ENCODE measurements at regions of chr12 and their contacts with region 1.

Region 1: GRCh38 chr12:107580750-107581618 is 104.6 kb upstream of the PWP1 start:
- DNase-seq: no peak
- H3K4me3 ChIP-seq: no peak overlapping the region
- H3K4me3 Mint-ChIP-seq: no peak overlapping the region
- H3K27ac ChIP-seq: no peak overlapping the region
- H3K27ac Mint-ChIP-seq: peak overlapping the region in 1 of 8 donors; percentile 69
- H3K4me1 ChIP-seq: no peaks in the 10 kb centered on the region
- H3K4me1 Mint-ChIP-seq: no peaks in the 10 kb centered on the region
- H3K27me3 ChIP-seq: no peaks in the 10 kb centered on the region
- H3K27me3 Mint-ChIP-seq: peaks cover 0 to 2% of the 10 kb centered on the region in 2 donors

Region 2: DNA sequence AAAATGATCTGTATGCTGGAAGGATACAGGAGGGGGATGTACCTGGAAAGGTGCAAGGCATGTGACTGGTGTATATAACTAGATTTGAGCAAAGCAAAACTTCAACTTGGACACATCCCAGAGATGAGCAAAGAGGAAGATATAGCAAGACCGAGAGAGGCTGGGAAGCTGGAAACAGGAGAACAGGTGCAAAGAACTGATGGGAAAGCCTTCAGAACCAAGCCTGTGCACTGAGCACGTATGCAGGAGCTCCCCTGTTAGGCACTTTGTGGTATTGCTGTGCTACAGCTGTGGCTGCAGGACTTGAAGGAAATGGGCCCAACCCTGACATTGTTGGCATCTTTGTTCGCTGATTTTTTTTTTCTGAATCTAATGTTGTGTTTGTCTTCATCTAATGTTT is 16.0 kb before region 1 on chr12:
- CTCF ChIA-PET with region 1: no interaction called
- POLR2A ChIA-PET with region 1: interaction called, 10 read pairs
- DNase-seq: peak in 1 of 5 donors; percentile 7
- H3K4me3 ChIP-seq: no peak overlapping the region
- H3K4me3 Mint-ChIP-seq: no peak overlapping the region
- H3K27ac ChIP-seq: no peak overlapping the region
- H3K27ac Mint-ChIP-seq: no peak overlapping the region
- H3K4me1 ChIP-seq: no peaks in the 10 kb centered on the region
- H3K4me1 Mint-ChIP-seq: peaks cover 0 to 6% (median 5%) of the 10 kb centered on the region in 3 donors
- H3K27me3 ChIP-seq: no peaks in the 10 kb centered on the region
- H3K27me3 Mint-ChIP-seq: peaks cover 0 to 6% of the 10 kb centered on the region in 2 donors

Region 3: GRCh38 chr12:107607464-107608392 is 26.7 kb after region 1 on chr12:
- CTCF ChIA-PET with region 1: no interaction called
- POLR2A ChIA-PET with region 1: no interaction called
- DNase-seq: peak; percentile 49 to 84 (median 71)
- H3K4me3 ChIP-seq: no peak overlapping the region
- H3K4me3 Mint-ChIP-seq: peak overlapping the region in 1 of 7 donors; percentile 2
- H3K27ac ChIP-seq: no peak overlapping the region
- H3K27ac Mint-ChIP-seq: peak overlapping the region in 1 of 8 donors; percentile 3
- H3K4me1 ChIP-seq: no peaks in the 10 kb centered on the region
- H3K4me1 Mint-ChIP-seq: no peaks in the 10 kb centered on the region
- H3K27me3 ChIP-seq: no peaks in the 10 kb centered on the region
- H3K27me3 Mint-ChIP-seq: no peaks in the 10 kb centered on the region

Region 4: DNA sequence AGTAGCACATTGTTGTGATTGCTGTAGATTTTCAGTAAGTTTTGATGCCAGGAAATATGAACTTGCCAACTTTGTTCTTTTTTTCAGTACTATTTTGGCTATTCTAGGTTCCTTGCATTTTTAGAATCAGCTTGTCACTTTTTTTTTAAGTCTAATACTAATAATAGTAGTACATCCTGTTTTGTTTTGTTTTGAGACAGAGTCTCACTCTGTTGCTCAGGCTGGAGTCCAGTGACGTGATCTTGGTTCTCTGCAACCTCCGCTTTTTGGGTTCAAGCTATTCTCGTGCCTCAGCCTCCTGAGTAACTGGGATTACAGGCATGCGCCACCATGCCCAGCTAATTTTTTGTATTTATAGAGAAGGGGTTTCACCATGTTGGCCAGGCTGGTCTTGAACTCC is 121.1 kb after region 1 on chr12:
- CTCF ChIA-PET with region 1: no interaction called
- POLR2A ChIA-PET with region 1: no interaction called
- DNase-seq: no peak
- H3K4me3 ChIP-seq: no peak overlapping the region
- H3K4me3 Mint-ChIP-seq: no peak overlapping the region
- H3K27ac ChIP-seq: no peak overlapping the region
- H3K27ac Mint-ChIP-seq: no peak overlapping the region
- H3K4me1 ChIP-seq: no peaks in the 10 kb centered on the region
- H3K4me1 Mint-ChIP-seq: peaks cover 0 to 10% (median 0%) of the 10 kb centered on the region in 3 donors
- H3K27me3 ChIP-seq: no peaks in the 10 kb centered on the region
- H3K27me3 Mint-ChIP-seq: no peaks in the 10 kb centered on the region

Measured in CD8-positive, alpha-beta memory T cell (primary cell).